GM12878 (cell line): ENCODE measurements at regions of chr19 and their contacts with region 1.

Region 1: GRCh38 chr19:13718733-13719132 is 45.6 kb upstream of the MRI1 start:
- DNase-seq: no peak
- ATAC-seq: no peak
- H3K4me3 ChIP-seq: no peak overlapping the region
- H3K27ac ChIP-seq: no peak overlapping the region
- H3K4me1 ChIP-seq: no peaks in the 10 kb centered on the region
- H3K27me3 ChIP-seq: no peaks in the 10 kb centered on the region
- CTCF ChIP-seq: no peak
- EP300 ChIP-seq: no peak
- POLR2A ChIP-seq: no peak
- RAD21 ChIP-seq: peak; percentile 23; the same call in 1 of the 2 replicates

Region 2: GRCh38 chr19:13597640-13598039 is 121.1 kb before region 1 on chr19:
- CTCF ChIA-PET with region 1: interaction called, 11 read pairs
- POLR2A ChIA-PET with region 1: interaction called, 5 read pairs
- RAD21 ChIA-PET with region 1: interaction called, 7 read pairs
- SMC1A ChIA-PET with region 1: interaction called, 6 read pairs
- in situ Hi-C with region 1: loop called (anchors 10 kb)
- intact Hi-C with region 1: loop called (anchors 2 kb)
- DNase-seq: peak; percentile 25
- ATAC-seq: peak; percentile 93
- H3K4me3 ChIP-seq: no peak overlapping the region
- H3K27ac ChIP-seq: no peak overlapping the region
- H3K4me1 ChIP-seq: no peaks in the 10 kb centered on the region
- H3K27me3 ChIP-seq: no peaks in the 10 kb centered on the region
- CTCF ChIP-seq: peak; percentile 57 to 85 (median 58); a peak in 5 of 6 replicates
- EP300 ChIP-seq: no peak
- POLR2A ChIP-seq: no peak
- RAD21 ChIP-seq: peak; percentile 88